SK-N-SH (cell line): ENCODE measurements at regions of chr3 and their contacts with region 1.

Region 1: DNA sequence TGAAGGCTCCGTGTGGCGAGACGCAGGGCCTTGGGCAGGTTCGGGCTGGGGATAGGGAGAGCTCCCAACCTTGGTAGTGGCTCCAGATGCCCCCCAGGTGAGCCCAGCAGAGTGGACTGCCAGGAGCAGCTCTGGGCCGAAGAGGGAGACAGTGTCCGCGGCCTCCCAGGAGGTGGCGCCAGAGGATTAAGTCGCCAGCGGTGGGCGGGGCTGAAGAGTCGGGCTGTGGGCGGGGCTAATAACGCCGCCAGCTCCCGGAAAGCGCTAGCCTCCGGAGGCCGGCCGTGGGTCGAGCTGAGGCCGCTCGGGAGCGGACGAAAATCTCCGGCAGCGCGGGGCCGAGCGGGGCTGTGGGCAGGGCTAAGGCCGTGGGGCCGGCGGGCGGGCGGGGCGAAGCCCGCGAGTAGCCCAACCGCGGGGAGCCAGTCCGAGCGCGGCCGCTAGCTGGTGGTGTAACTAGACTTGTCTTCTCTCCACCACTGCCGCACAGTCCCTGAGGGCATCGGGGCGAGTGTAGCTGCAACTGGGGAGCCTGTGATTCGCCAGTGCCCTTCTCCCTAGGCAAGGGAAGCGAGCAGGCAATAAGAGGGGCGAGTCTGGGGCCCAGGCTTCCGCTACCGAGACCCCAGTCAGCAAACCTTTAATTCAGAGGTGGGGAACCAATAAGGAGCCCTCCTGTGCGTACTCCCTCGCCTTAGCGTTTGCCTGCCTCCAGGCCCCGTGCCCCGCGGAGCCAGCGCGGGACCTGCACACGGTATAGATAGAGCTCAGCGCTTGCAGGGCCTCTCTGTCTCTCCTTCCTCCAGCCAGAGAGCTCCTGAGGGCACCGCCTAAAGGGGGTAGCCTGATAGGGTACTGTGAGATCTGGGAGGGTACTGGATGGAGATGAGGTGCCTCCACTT is 14.4 kb upstream of the BSN start:
- DNase-seq: peak; percentile 97
- H3K4me3 ChIP-seq: peak overlapping the region; percentile 51 to 67
- H3K27ac ChIP-seq: peak overlapping the region; percentile 39 to 91; a peak in 3 of 4 replicates
- H3K4me1 ChIP-seq: peaks cover 0 to 17% of the 10 kb centered on the region in 2 experiments; a peak in 2 of 4 replicates
- H3K27me3 ChIP-seq: peaks cover 1% of the 10 kb centered on the region; the same call in 1 of the 2 replicates
- CTCF ChIP-seq: peak; percentile 87
- EP300 ChIP-seq: no peak
- RAD21 ChIP-seq: peak; percentile 94

Region 2: GRCh38 chr3:49469936-49470713 is 69.8 kb before region 1 on chr3 and contains the start of gene DAG1:
- CTCF ChIA-PET with region 1: interaction called, 19 read pairs
- POLR2A ChIA-PET with region 1: no interaction called
- DNase-seq: peak; percentile 97
- H3K4me3 ChIP-seq: peak within 1 kb of the TSS; percentile 74 to 75
- H3K27ac ChIP-seq: peak within 1 kb of the TSS; percentile 97
- H3K4me1 ChIP-seq: peaks cover 5 to 20% of the 10 kb centered on the region in 2 experiments; a peak in 2 of 4 replicates
- H3K27me3 ChIP-seq: no peaks in the 10 kb centered on the region
- CTCF ChIP-seq: no peak
- EP300 ChIP-seq: no peak; a peak in 1 of 4 replicates
- RAD21 ChIP-seq: no peak
- polyA plus RNA-seq, gene DAG1: 50.2 and 54.4 TPM in 2 replicates

Region 3: GRCh38 chr3:49553692-49554632 is 14.1 kb after region 1 on chr3 and contains the start of gene BSN:
- CTCF ChIA-PET with region 1: interaction called, 97 read pairs
- POLR2A ChIA-PET with region 1: interaction called, 8 read pairs
- DNase-seq: peak; percentile 100
- H3K4me3 ChIP-seq: peak within 1 kb of the TSS; percentile 81 to 85
- H3K27ac ChIP-seq: peak within 1 kb of the TSS in 1 of 2 experiments; percentile 84; a peak in 3 of 4 replicates
- H3K4me1 ChIP-seq: peaks cover 0 to 31% of the 10 kb centered on the region in 2 experiments; a peak in 2 of 4 replicates
- H3K27me3 ChIP-seq: no peaks in the 10 kb centered on the region
- CTCF ChIP-seq: no peak
- EP300 ChIP-seq: no peak; a peak in 1 of 4 replicates
- RAD21 ChIP-seq: no peak
- polyA plus RNA-seq, gene BSN: 0.07 and 0.08 TPM in 2 replicates

Region 4: GRCh38 chr3:49626101-49626581 is 86.2 kb after region 1 on chr3:
- CTCF ChIA-PET with region 1: interaction called, 11 read pairs
- POLR2A ChIA-PET with region 1: interaction called, 3 read pairs
- DNase-seq: no peak
- H3K4me3 ChIP-seq: no peak overlapping the region
- H3K27ac ChIP-seq: no peak overlapping the region
- H3K4me1 ChIP-seq: peaks cover 0 to 35% of the 10 kb centered on the region in 2 experiments; a peak in 1 of 4 replicates
- H3K27me3 ChIP-seq: peaks cover 21% of the 10 kb centered on the region; the same call in 1 of the 2 replicates
- CTCF ChIP-seq: no peak
- EP300 ChIP-seq: no peak
- RAD21 ChIP-seq: no peak

Region 5: DNA sequence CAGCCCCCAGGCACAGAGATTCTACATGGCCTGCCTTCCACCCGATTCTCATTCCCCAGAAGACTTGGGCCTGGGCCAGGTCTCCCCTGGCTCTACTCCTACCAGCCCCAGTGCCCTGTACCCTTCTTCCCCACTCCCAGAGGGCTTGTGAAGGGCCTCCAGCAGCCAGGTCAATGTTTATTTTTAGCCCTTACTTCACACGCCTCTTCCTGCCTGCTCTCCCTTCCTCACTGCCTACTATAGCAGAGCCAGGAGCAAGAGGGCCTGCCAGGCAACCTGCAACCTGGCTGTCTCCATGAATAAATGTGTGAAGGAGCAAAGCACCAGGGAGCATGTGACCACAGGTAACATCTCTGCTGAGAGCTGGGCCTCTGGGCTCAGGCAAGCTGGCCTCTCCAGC is 107.8 kb after region 1 on chr3:
- CTCF ChIA-PET with region 1: interaction called, 19 read pairs
- POLR2A ChIA-PET with region 1: no interaction called
- DNase-seq: no peak
- H3K4me3 ChIP-seq: no peak overlapping the region
- H3K27ac ChIP-seq: no peak overlapping the region; a peak in 1 of 4 replicates
- H3K4me1 ChIP-seq: peaks cover 0 to 9% of the 10 kb centered on the region in 2 experiments; a peak in 1 of 4 replicates
- H3K27me3 ChIP-seq: no peaks in the 10 kb centered on the region
- CTCF ChIP-seq: no peak
- EP300 ChIP-seq: no peak
- RAD21 ChIP-seq: no peak

Region 6: DNA sequence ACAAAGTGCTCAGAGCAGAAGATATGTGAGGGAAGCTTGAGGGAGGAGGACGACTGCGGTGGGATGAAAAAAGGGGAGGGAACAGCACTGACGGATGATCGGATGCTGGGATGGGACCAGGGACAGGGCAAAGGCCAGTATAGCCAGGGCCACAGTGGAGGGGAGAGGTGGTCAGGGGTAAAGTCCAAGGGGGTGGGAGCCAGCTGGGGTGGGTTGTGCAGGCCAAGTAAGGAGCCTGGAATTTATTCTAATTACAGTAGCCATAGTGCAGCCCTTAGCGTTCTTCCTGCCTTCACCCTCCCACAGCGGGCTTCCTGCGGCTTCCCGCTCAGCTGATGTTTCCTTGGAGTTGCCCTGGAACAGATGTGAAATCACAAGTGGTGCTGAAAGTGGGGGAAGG is 126.7 kb after region 1 on chr3:
- CTCF ChIA-PET with region 1: interaction called, 299 read pairs
- POLR2A ChIA-PET with region 1: interaction called, 21 read pairs
- DNase-seq: no peak
- H3K4me3 ChIP-seq: no peak overlapping the region
- H3K27ac ChIP-seq: no peak overlapping the region
- H3K4me1 ChIP-seq: peaks cover 0 to 4% of the 10 kb centered on the region in 2 experiments; a peak in 1 of 4 replicates
- H3K27me3 ChIP-seq: no peaks in the 10 kb centered on the region
- CTCF ChIP-seq: no peak
- EP300 ChIP-seq: no peak
- RAD21 ChIP-seq: no peak

Region 7: GRCh38 chr3:49703443-49703927 is 163.6 kb after region 1 on chr3:
- CTCF ChIA-PET with region 1: interaction called, 19 read pairs
- POLR2A ChIA-PET with region 1: no interaction called
- DNase-seq: peak; percentile 92
- H3K4me3 ChIP-seq: no peak overlapping the region
- H3K27ac ChIP-seq: no peak overlapping the region
- H3K4me1 ChIP-seq: no peaks in the 10 kb centered on the region
- H3K27me3 ChIP-seq: no peaks in the 10 kb centered on the region
- CTCF ChIP-seq: peak; percentile 70
- EP300 ChIP-seq: no peak
- RAD21 ChIP-seq: peak; percentile 77